Prostate gland (tissue), 2 donors: ENCODE measurements at regions of chr12 and their contacts with region 1.

Region 1: DNA sequence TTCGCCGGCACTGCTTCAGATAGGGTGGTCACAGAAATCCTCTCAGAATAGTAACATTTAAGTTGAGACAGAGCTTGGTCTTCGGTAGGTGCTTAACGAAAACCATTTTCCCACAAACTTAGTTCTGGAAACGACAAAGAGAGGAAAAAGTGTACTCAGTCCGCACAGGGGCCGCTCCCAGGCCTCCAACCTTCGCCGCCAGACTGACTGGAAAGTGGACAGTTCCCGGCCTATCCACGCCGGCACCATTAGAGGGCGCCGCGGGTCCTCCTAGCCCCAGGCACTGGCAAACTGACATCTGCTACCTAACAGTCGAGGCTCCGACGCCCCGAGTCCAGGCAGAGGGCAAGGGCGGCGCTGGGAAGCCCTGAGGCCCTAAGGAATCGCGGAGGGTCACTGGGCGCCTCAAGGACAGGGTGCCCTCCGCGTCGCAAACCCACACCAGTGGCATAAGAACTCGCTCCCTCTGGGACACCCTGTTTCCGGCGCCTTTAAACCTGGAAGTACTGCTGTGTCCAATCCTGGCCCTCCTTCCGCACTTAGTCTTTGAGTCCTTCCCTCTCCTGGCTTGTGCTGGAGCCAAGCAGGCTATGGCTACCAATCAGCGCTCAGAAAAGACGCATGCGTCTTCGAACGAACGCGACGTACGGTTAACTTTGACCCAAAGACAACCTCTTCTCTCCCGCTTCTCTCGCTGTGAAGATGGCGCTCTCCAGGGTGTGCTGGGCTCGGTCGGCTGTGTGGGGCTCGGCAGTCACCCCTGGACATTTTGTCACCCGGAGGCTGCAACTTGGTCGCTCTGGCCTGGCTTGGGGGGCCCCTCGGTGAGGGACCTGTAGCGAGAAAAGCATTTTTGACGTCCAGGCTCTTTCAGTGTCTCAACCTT is at the start of gene LETMD1:
- DNase-seq: peak; percentile 96
- H3K4me3 ChIP-seq: peak within 1 kb of the TSS; percentile 66 to 76
- H3K27ac ChIP-seq: peak within 1 kb of the TSS; percentile 85 to 89
- H3K4me1 ChIP-seq: peaks cover 7% of the 10 kb centered on the region
- H3K27me3 ChIP-seq: no peaks in the 10 kb centered on the region
- CTCF ChIP-seq: peak; percentile 69 to 90 (median 90)
- POLR2A ChIP-seq: peak; percentile 55
- total RNA-seq, gene LETMD1: 63.3 to 63.6 TPM

Region 2: GRCh38 chr12:51011955-51012354 is 35.9 kb before region 1 on chr12:
- intact Hi-C with region 1: no loop called
- DNase-seq: no peak
- H3K4me3 ChIP-seq: no peak overlapping the region
- H3K27ac ChIP-seq: no peak overlapping the region
- H3K4me1 ChIP-seq: no peaks in the 10 kb centered on the region
- H3K27me3 ChIP-seq: no peaks in the 10 kb centered on the region
- CTCF ChIP-seq: no peak
- POLR2A ChIP-seq: no peak

Region 3: DNA sequence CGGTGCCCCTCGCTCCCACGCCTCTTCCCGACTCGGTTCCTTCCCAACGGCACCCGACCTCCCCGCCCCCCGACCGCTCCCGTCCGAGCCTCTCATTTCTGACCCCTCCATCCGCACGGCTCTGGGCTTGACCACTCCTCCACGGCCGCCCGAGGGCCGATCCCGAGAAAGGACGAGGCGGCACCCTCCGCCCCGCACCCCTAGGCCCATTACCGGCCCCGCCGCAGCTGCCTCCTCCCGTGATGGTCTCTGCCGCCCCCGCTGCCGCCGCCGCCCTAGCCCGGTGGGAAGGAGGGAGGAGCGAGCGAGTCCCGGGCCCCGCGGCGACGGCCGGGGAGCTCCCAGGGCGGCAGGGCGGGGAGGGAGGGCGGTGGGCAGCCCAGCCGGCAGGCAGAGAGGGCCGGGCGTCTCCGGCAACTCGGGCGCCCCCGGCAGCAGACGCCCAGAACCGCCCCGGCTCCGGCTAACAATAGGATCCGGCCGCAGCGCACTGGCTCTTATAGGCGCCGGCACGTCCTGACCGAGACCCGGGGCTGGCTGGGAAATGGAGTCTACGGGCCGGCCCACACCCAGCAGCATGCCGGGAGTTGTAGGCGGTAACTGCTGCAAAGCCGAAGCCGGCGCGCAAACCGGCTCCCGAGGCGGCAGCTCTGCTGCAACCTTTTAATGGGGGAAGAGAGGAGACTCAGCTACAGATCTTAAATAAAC is 35.4 kb after region 1 on chr12 and contains the start of gene CSRNP2:
- intact Hi-C with region 1: loop called (anchors 5 kb)
- DNase-seq: peak; percentile 97
- H3K4me3 ChIP-seq: peak within 1 kb of the TSS; percentile 87 to 94
- H3K27ac ChIP-seq: peak within 1 kb of the TSS; percentile 84 to 90
- H3K4me1 ChIP-seq: no peaks in the 10 kb centered on the region
- H3K27me3 ChIP-seq: no peaks in the 10 kb centered on the region
- CTCF ChIP-seq: peak in 1 of 4 experiments; percentile 29
- POLR2A ChIP-seq: peak; percentile 98
- total RNA-seq, gene CSRNP2: 27.3 to 46.1 TPM